Activated CD4-positive, alpha-beta T cell treated with anti-CD3 and anti-CD28 coated beads for 36 hours (primary cell): ENCODE measurements at regions of chr16 and their contacts with region 1.

Region 1: DNA sequence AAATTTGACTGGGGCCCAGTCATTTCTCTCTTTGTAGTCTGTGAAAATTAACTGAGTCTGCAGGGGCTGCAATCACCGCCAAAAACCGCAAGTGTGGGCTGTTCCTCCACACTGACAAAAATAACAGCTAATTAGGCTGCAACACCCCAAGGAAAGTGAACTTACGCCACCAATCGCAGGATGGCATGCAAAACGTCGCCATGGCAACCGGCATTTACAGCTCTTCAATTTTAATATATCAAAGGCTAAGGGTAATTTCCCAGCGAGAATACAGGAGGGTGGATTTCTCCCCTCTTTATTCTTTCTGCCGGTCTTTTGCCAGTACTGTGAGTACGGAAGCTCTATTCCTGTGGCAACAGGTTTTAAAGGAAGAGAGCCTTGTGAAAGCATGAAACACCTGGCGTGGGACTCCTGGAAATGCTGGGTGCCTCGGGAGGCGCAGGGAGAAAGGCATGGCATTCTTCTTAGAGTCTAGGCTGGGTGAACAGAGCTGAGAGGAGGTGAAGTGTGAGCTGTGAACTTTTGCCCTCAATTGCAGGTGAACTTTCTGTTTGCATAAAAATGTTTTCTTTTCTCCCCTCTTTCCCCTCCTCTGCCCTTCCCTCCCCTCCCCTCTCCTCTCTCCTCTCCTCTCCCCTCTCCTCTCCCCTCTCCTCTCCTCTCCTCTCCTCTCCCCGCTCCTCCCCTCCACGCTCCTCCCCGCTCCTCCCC is 399.7 kb downstream of the XYLT1 start:
- DNase-seq: peak; percentile 88
- ATAC-seq: peak; percentile 85
- H3K4me3 Mint-ChIP-seq: peak overlapping the region; percentile 68
- H3K27ac Mint-ChIP-seq: peak overlapping the region; percentile 72
- H3K4me1 Mint-ChIP-seq: peaks cover 19% of the 10 kb centered on the region
- H3K27me3 Mint-ChIP-seq: no peaks in the 10 kb centered on the region

Region 2: GRCh38 chr16:17026600-17027242 is 44.3 kb before region 1 on chr16:
- CTCF ChIA-PET with region 1: interaction called, 3 read pairs
- POLR2A ChIA-PET with region 1: no interaction called
- intact Hi-C with region 1: loop called (anchors 1 to 2 kb)
- DNase-seq: peak; percentile 68
- ATAC-seq: peak; percentile 93
- H3K4me3 Mint-ChIP-seq: no peak overlapping the region
- H3K27ac Mint-ChIP-seq: peak overlapping the region; percentile 48
- H3K4me1 Mint-ChIP-seq: peaks cover 27% of the 10 kb centered on the region
- H3K27me3 Mint-ChIP-seq: no peaks in the 10 kb centered on the region

Region 3: DNA sequence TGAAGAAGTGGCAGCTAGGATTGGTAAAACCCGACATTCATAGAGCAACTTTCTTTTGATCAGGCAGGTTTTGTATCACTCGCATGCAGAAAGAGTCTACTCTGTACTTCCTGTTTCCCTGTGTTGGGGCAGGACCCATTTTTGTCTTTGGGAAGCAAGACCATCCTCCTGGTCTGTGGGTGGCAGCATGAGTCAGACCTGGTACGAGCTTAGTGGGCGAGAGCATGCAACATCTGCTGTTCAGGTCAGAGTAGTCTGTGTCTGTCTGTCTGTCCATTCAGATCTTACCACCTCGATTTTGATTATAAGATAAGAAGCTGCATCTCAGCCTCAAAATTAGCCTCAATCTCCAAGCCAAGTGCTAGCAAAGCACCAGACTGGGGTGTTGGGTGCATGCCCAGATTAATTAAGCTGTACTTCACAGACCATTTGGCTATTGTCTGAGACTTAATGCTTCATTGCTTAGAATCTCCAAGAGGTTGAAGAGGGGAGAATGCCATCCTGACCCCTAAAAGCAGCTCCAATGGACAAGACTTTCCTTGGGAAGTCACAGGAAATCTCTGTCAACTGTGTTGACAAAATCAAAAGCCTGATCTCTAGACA is 288.9 kb after region 1 on chr16:
- CTCF ChIA-PET with region 1: no interaction called
- POLR2A ChIA-PET with region 1: no interaction called
- intact Hi-C with region 1: no loop called
- DNase-seq: peak; percentile 78
- ATAC-seq: peak; percentile 82
- H3K4me3 Mint-ChIP-seq: no peak overlapping the region
- H3K27ac Mint-ChIP-seq: peak overlapping the region; percentile 66
- H3K4me1 Mint-ChIP-seq: peaks cover 77% of the 10 kb centered on the region
- H3K27me3 Mint-ChIP-seq: no peaks in the 10 kb centered on the region